ENCODE measurements at regions of chr21 and their contacts with region 1.

Region 1: GRCh38 chr21:43611598-43612369 is 47.5 kb downstream of the HSF2BP start:
- DNase-seq: peak; percentile 19 to 75
- H3K4me3 ChIP-seq: no peak overlapping the region
- H3K27ac ChIP-seq: no peak overlapping the region
- H3K4me1 ChIP-seq: no peaks in the 10 kb centered on the region
- H3K27me3 ChIP-seq: no peaks in the 10 kb centered on the region
- CTCF ChIP-seq: peak; percentile 72 to 88 (median 79)
- EP300 ChIP-seq: no peak
- POLR2A ChIP-seq: no peak
- RAD21 ChIP-seq: peak; percentile 61 to 72

Region 2: GRCh38 chr21:43585924-43586424 is 25.8 kb before region 1 on chr21:
- CTCF ChIA-PET with region 1: interaction called, 10 read pairs
- POLR2A ChIA-PET with region 1: interaction called, 3 read pairs
- DNase-seq: no peak
- H3K4me3 ChIP-seq: no peak overlapping the region
- H3K27ac ChIP-seq: no peak overlapping the region
- H3K4me1 ChIP-seq: no peaks in the 10 kb centered on the region; a peak in 2 of 7 replicates
- H3K27me3 ChIP-seq: no peaks in the 10 kb centered on the region
- CTCF ChIP-seq: no peak
- EP300 ChIP-seq: no peak
- POLR2A ChIP-seq: no peak
- RAD21 ChIP-seq: no peak

Region 3: DNA sequence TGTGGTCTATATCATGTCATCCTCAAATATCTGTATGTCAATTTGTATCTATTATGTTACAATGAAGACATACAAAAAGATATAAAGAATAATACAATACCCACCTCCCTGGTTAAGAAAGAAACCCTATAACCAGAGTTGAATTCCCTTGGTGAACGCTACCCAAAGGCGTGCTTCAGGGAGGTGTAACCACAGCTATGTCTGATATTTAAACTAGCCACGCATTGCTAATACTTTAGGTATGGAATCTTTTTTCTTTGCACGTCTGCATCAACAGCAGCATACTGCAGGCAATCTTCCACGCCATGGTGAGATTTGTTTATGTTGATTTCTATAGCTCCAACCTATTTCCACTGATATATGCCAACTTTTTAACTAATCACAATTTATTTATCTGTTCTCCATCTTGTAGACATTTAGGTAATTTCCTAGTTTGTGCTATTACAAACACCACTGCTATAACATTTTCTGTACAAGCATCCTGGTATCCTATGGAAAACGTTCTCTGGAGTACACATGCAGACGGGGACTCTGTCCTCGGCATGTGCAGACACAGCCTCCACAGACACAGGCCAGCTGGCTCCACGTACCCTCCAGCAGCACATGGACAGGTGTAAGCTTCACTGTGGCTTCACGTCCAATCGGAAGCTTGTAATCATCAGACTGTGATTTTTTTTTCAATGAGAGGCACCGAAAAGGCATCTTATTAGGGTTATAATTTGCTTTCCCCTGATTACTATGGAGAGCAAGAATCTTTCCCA is 11.0 kb before region 1 on chr21:
- CTCF ChIA-PET with region 1: interaction called, 34 read pairs
- POLR2A ChIA-PET with region 1: no interaction called
- DNase-seq: no peak
- H3K4me3 ChIP-seq: no peak overlapping the region
- H3K27ac ChIP-seq: no peak overlapping the region
- H3K4me1 ChIP-seq: no peaks in the 10 kb centered on the region; a peak in 1 of 7 replicates
- H3K27me3 ChIP-seq: no peaks in the 10 kb centered on the region
- CTCF ChIP-seq: no peak
- EP300 ChIP-seq: no peak
- POLR2A ChIP-seq: no peak
- RAD21 ChIP-seq: no peak

Region 4: DNA sequence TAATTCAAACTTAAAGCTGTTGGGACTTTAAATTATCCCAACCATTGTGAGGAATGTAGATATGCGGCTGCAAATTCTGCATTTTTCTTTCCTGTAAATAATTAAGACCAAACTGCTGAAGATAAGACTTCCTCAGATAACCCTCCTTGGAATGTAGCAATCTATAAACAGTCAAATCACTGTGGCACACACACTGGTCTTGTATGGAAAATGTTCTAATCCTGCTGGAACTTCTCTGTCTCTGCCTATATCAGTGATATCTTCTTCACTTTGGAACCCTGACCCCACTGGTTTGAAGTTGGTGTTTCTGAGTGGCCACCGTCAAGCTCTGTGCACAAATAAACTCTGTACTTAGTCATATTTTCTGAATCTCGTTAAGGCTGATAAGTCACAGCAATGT is 14.6 kb after region 1 on chr21:
- CTCF ChIA-PET with region 1: interaction called, 27 read pairs
- POLR2A ChIA-PET with region 1: no interaction called
- DNase-seq: no peak
- H3K4me3 ChIP-seq: no peak overlapping the region
- H3K27ac ChIP-seq: no peak overlapping the region
- H3K4me1 ChIP-seq: no peaks in the 10 kb centered on the region; a peak in 1 of 7 replicates
- H3K27me3 ChIP-seq: no peaks in the 10 kb centered on the region
- CTCF ChIP-seq: no peak
- EP300 ChIP-seq: no peak
- POLR2A ChIP-seq: no peak
- RAD21 ChIP-seq: no peak

Region 5: GRCh38 chr21:43646550-43647260 is 34.9 kb after region 1 on chr21:
- CTCF ChIA-PET with region 1: interaction called, 47 read pairs
- POLR2A ChIA-PET with region 1: no interaction called
- DNase-seq: peak; percentile 85 to 93
- H3K4me3 ChIP-seq: no peak overlapping the region
- H3K27ac ChIP-seq: no peak overlapping the region
- H3K4me1 ChIP-seq: no peaks in the 10 kb centered on the region
- H3K27me3 ChIP-seq: no peaks in the 10 kb centered on the region
- CTCF ChIP-seq: peak; percentile 96 to 100 (median 99)
- EP300 ChIP-seq: no peak
- POLR2A ChIP-seq: no peak
- RAD21 ChIP-seq: peak; percentile 100

Region 6: GRCh38 chr21:43778469-43779335 is 166.9 kb after region 1 on chr21:
- CTCF ChIA-PET with region 1: no interaction called
- POLR2A ChIA-PET with region 1: no interaction called
- DNase-seq: no peak
- H3K4me3 ChIP-seq: 0 out of 8 replicates have a peak overlapping the region, but pooled peaks of 1 of the 4 experiments have one; percentile 5
- H3K27ac ChIP-seq: 0 out of 2 replicates have a peak overlapping the region, but pooled peaks have one; percentile 5
- H3K4me1 ChIP-seq: peaks cover 0 to 9% (median 4%) of the 10 kb centered on the region in 4 experiments; a peak in 5 of 7 replicates
- H3K27me3 ChIP-seq: no peaks in the 10 kb centered on the region
- CTCF ChIP-seq: no peak
- EP300 ChIP-seq: no peak
- POLR2A ChIP-seq: no peak
- RAD21 ChIP-seq: no peak